Endothelial cell of umbilical vein (primary cell): ENCODE measurements at regions of chr2 and their contacts with region 1.

Region 1: DNA sequence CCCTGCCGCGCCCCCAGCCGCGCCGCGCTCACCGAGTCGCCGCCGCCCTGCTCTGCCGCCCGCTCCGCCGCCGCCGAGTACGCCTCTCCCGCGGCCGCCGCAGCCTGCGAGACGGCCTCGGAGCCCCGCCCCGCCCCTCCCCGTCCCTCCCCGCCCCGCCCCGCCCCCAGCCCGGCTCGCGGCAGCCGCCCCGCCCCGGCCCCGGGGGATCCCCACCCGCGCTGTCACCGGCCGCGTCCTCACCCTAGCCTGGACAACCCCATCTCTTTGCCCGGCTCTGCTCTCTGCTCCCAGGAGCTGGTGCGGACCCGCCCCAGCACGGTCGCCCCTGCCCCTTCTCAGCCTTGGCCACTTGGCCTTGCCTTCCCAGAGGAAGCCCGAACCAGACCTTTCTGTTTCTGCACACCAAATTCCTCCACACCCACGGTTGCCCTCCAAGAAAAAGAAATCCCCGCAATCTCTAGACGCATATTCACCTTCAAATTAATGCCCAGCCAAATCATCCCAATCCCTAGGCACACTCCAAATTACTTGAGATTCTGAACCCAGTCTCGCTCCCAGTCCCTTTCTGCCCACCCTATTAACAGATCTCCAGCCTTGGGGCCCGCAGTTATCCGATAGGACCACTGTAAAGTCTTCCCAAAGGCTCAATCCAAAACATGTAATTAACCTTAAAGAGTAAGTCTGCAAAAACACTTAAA is at the start of gene CYRIA:
- DNase-seq: no peak
- H3K4me3 ChIP-seq: peak within 1 kb of the TSS; percentile 49 to 86 (median 70)
- H3K27ac ChIP-seq: peak within 1 kb of the TSS; percentile 98
- H3K4me1 ChIP-seq: peaks cover 36% of the 10 kb centered on the region
- H3K27me3 ChIP-seq: no peaks in the 10 kb centered on the region
- CTCF ChIP-seq: no peak
- POLR2A ChIP-seq: peak; percentile 43
- total RNA-seq, gene CYRIA: 38.4 and 40.3 TPM in 2 replicates

Region 2: GRCh38 chr2:16303273-16303577 is 362.7 kb before region 1 on chr2:
- CTCF ChIA-PET with region 1: no interaction called
- POLR2A ChIA-PET with region 1: no interaction called
- dilution Hi-C with region 1: no loop called
- intact Hi-C with region 1: no loop called
- DNase-seq: no peak
- H3K4me3 ChIP-seq: no peak overlapping the region
- H3K27ac ChIP-seq: no peak overlapping the region
- H3K4me1 ChIP-seq: no peaks in the 10 kb centered on the region
- H3K27me3 ChIP-seq: no peaks in the 10 kb centered on the region
- CTCF ChIP-seq: no peak
- POLR2A ChIP-seq: no peak

Region 3: GRCh38 chr2:16617282-16618261 is 48.3 kb before region 1 on chr2:
- CTCF ChIA-PET with region 1: interaction called, 12 read pairs
- POLR2A ChIA-PET with region 1: no interaction called
- dilution Hi-C with region 1: no loop called
- intact Hi-C with region 1: loop called (anchors 1 kb)
- DNase-seq: peak; percentile 59
- H3K4me3 ChIP-seq: no peak overlapping the region
- H3K27ac ChIP-seq: no peak overlapping the region
- H3K4me1 ChIP-seq: peaks cover 9% of the 10 kb centered on the region
- H3K27me3 ChIP-seq: no peaks in the 10 kb centered on the region
- CTCF ChIP-seq: peak; percentile 43 to 45
- POLR2A ChIP-seq: no peak

Region 4: GRCh38 chr2:16625201-16625729 is 40.6 kb before region 1 on chr2:
- CTCF ChIA-PET with region 1: interaction called, 4 read pairs
- POLR2A ChIA-PET with region 1: no interaction called
- dilution Hi-C with region 1: no loop called
- intact Hi-C with region 1: loop called (anchors 1 kb)
- DNase-seq: peak; percentile 67
- H3K4me3 ChIP-seq: no peak overlapping the region
- H3K27ac ChIP-seq: peak overlapping the region; percentile 54
- H3K4me1 ChIP-seq: peaks cover 31% of the 10 kb centered on the region
- H3K27me3 ChIP-seq: no peaks in the 10 kb centered on the region
- CTCF ChIP-seq: no peak
- POLR2A ChIP-seq: peak; percentile 17

Region 5: DNA sequence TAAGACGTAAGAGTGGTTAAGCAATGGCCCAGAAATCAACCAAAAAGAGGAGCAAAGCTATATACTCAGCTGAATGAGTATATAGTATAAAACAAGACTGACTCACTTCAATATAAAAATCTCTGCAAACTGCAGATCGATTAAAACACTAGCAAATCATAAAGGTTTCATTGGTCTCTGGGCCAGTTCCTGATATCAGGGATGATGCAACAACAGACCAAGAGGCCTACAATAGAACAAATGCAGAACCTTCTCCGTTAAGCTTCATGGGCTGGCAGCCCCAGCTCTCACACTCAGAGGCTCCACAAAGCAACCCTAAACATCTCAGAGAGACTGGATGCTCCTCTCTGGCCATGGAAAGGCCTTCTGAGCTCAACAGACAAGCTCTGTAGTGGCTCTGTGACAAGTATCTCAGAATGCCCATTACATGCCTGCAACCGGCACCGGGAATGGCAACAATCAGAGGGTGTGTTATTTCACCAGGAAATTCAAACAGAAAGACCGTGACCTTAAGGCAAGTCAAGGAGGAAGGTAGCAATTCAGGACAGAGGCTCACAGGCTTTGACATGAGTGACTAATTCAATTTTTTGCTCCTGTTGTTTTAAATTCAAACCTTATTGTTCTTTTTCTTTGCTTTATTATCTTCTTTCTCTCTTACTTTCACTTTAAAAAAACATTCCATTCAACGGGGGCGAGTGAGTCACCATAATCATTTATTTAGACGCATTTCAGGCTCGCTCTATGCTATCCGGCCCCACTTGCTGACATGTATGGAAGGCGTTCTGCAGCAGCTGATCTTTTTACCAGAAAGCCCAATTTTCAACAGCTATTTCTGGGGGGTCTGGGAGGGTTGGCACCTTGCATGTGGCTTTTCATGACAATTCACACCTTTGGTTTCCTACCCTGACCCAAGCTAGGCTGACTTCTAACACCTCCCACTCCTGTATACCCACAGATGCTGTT is 15.3 kb before region 1 on chr2:
- CTCF ChIA-PET with region 1: interaction called, 48 read pairs
- POLR2A ChIA-PET with region 1: interaction called, 5 read pairs
- dilution Hi-C with region 1: no loop called
- intact Hi-C with region 1: loop called (anchors 1 kb)
- DNase-seq: peak; percentile 90
- H3K4me3 ChIP-seq: peak overlapping the region in 2 of 3 experiments; percentile 12 to 48
- H3K27ac ChIP-seq: peak overlapping the region; percentile 80
- H3K4me1 ChIP-seq: peaks cover 42% of the 10 kb centered on the region
- H3K27me3 ChIP-seq: no peaks in the 10 kb centered on the region
- CTCF ChIP-seq: no peak
- POLR2A ChIP-seq: no peak

Region 6: GRCh38 chr2:16756831-16757644 is 91.1 kb after region 1 on chr2:
- CTCF ChIA-PET with region 1: interaction called, 5 read pairs
- POLR2A ChIA-PET with region 1: no interaction called
- dilution Hi-C with region 1: no loop called
- intact Hi-C with region 1: loop called (anchors 5 kb)
- DNase-seq: peak; percentile 67
- H3K4me3 ChIP-seq: no peak overlapping the region
- H3K27ac ChIP-seq: no peak overlapping the region
- H3K4me1 ChIP-seq: no peaks in the 10 kb centered on the region
- H3K27me3 ChIP-seq: peaks cover 0 to 2% of the 10 kb centered on the region in 2 experiments
- CTCF ChIP-seq: peak; percentile 78 to 84
- POLR2A ChIP-seq: no peak